Naive thymus-derived CD4-positive, alpha-beta T cell (primary cell): ENCODE measurements at regions of chr11 and their contacts with region 1.

Region 1: GRCh38 chr11:64846998-64847666 is 2.7 kb upstream of the CDC42BPG start:
- DNase-seq: peak; percentile 79 to 96 (median 89)
- ATAC-seq: peak; percentile 78
- H3K4me3 ChIP-seq: no peak overlapping the region
- H3K4me3 Mint-ChIP-seq: peak overlapping the region in 7 of 10 donors; percentile 14 to 55 (median 38)
- H3K27ac ChIP-seq: no peak overlapping the region
- H3K27ac Mint-ChIP-seq: peak overlapping the region; percentile 21 to 83 (median 72)
- H3K4me1 ChIP-seq: peaks cover 41 to 59% of the 10 kb centered on the region in 2 donors
- H3K4me1 Mint-ChIP-seq: peaks cover 40 to 68% (median 58%) of the 10 kb centered on the region in 7 donors
- H3K27me3 ChIP-seq: no peaks in the 10 kb centered on the region
- H3K27me3 Mint-ChIP-seq: no peaks in the 10 kb centered on the region

Region 2: DNA sequence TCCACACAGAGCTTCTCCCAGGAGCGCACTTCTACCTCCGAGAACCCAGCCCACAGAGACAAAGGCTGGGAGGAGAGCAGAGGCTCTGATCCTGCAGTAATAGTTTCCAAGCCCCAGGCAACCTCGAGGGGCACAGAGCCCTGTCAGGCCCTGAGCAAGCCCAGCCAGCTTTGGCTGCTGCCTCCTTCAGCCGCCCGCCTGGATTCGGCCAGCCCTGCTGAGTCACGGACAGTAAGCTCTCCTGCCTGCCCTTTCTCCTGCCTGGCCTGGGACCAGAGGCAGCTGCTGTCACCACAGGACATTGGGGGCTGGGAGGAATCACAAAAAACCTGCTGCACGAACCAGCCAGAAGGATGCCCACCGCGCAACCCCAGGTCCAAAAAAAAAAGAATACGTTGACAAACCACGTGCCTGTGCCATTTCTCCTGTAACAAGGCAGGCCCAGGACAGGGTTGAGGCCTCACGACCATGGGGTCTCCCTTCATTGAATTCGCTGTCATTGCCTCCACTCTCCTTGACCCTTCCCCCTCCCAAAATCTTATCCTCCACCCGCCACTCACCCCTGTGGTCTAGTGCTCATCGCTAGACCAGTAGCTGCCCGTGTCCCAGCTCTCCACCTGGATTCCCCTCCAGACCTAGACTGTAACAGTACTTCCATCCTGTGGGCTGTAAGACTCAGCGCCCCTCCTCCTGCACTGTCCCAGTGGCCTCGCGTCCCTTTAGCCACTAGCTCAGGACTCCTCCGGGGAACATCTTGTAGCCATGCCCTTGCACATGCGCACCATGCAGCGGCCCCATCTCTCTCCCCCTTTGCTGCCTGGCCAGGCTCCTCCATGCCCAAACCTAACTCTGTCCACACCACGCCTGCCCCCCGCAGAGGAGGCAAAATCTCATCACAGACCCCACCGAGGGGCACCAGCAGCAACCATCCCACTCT is 263.6 kb before region 1 on chr11:
- CTCF ChIA-PET with region 1: no interaction called
- POLR2A ChIA-PET with region 1: no interaction called
- intact Hi-C with region 1: no loop called
- DNase-seq: no peak
- ATAC-seq: no peak
- H3K4me3 ChIP-seq: no peak overlapping the region
- H3K4me3 Mint-ChIP-seq: no peak overlapping the region
- H3K27ac ChIP-seq: no peak overlapping the region
- H3K27ac Mint-ChIP-seq: no peak overlapping the region
- H3K4me1 ChIP-seq: no peaks in the 10 kb centered on the region
- H3K4me1 Mint-ChIP-seq: peaks cover 0 to 1% (median 0%) of the 10 kb centered on the region in 7 donors
- H3K27me3 ChIP-seq: no peaks in the 10 kb centered on the region
- H3K27me3 Mint-ChIP-seq: peaks cover 7 to 17% (median 11%) of the 10 kb centered on the region in 5 donors

Region 3: GRCh38 chr11:64778508-64779346 is 68.4 kb before region 1 on chr11 and contains the start of gene SF1:
- CTCF ChIA-PET with region 1: interaction called, 5 read pairs
- POLR2A ChIA-PET with region 1: interaction called, 23 read pairs
- intact Hi-C with region 1: loop called in 1 of 2 experiments (anchors 1 kb)
- DNase-seq: peak; percentile 86 to 100 (median 100)
- ATAC-seq: peak; percentile 89
- H3K4me3 ChIP-seq: peak within 1 kb of the TSS; percentile 94
- H3K4me3 Mint-ChIP-seq: peak within 1 kb of the TSS; percentile 90 to 97 (median 94)
- H3K27ac ChIP-seq: peak within 1 kb of the TSS; percentile 99
- H3K27ac Mint-ChIP-seq: peak within 1 kb of the TSS; percentile 98 to 100 (median 99)
- H3K4me1 ChIP-seq: peaks cover 48 to 52% of the 10 kb centered on the region in 2 donors
- H3K4me1 Mint-ChIP-seq: peaks cover 51 to 71% (median 64%) of the 10 kb centered on the region in 7 donors
- H3K27me3 ChIP-seq: no peaks in the 10 kb centered on the region
- H3K27me3 Mint-ChIP-seq: peaks cover 0 to 5% (median 0%) of the 10 kb centered on the region in 5 donors
- total RNA-seq, gene SF1: 462 to 1,612 (median 904) TPM

Region 4: DNA sequence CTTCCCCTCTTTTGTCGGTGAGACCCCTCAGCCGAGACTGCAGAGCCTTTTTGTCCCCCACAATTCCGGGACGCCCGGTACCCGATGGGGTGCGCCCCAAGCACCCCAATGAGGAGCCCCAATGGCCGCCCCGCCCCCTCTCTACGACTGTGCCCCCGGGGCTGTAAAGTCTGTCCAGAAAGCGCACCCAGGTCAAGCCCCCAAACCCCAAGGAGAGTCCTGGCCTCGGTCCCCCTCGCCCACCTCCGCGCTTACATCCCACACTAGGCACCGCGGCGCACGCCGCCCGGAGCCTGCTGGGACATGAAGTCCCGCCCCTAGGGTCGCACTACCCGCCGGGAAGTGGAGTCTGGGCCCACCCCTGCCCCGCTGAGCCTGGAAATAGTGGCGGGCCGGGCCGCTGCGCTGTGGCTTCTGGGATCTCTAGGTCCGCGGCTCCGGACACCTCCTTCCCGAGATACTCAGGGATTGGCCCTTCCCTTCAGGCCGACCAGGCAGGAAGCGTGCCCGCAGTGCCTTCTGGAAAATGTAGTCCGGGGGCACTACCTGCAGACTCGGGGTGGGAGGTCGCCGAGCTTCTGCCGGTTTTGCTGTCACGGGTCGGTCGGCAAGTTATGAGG is 36.8 kb before region 1 on chr11 and contains the start of gene MEN1:
- CTCF ChIA-PET with region 1: interaction called, 10 read pairs
- POLR2A ChIA-PET with region 1: interaction called, 6 read pairs
- intact Hi-C with region 1: loop called in 1 of 2 experiments (anchors 2 kb)
- DNase-seq: peak; percentile 64 to 85 (median 81)
- ATAC-seq: peak; percentile 91
- H3K4me3 ChIP-seq: peak within 1 kb of the TSS; percentile 99
- H3K4me3 Mint-ChIP-seq: peak within 1 kb of the TSS; percentile 91 to 98 (median 96)
- H3K27ac ChIP-seq: peak within 1 kb of the TSS; percentile 97
- H3K27ac Mint-ChIP-seq: peak within 1 kb of the TSS; percentile 88 to 97 (median 94)
- H3K4me1 ChIP-seq: peaks cover 7 to 11% of the 10 kb centered on the region in 2 donors
- H3K4me1 Mint-ChIP-seq: peaks cover 23 to 34% (median 30%) of the 10 kb centered on the region in 7 donors
- H3K27me3 ChIP-seq: no peaks in the 10 kb centered on the region
- H3K27me3 Mint-ChIP-seq: peaks cover 0 to 6% (median 0%) of the 10 kb centered on the region in 5 donors
- total RNA-seq, gene MEN1: 25.7 to 46.4 (median 38.0) TPM

Region 5: GRCh38 chr11:64887757-64888405 is 40.7 kb after region 1 on chr11:
- CTCF ChIA-PET with region 1: interaction called, 945 read pairs
- POLR2A ChIA-PET with region 1: interaction called, 1,324 read pairs
- intact Hi-C with region 1: loop called in 1 of 2 experiments (anchors 1 kb)
- DNase-seq: peak; percentile 74 to 94 (median 84)
- ATAC-seq: peak; percentile 92
- H3K4me3 ChIP-seq: peak overlapping the region; percentile 50
- H3K4me3 Mint-ChIP-seq: peak overlapping the region; percentile 15 to 89 (median 80)
- H3K27ac ChIP-seq: peak overlapping the region; percentile 49
- H3K27ac Mint-ChIP-seq: peak overlapping the region in 8 of 9 donors; percentile 51 to 95 (median 85)
- H3K4me1 ChIP-seq: peaks cover 15 to 21% of the 10 kb centered on the region in 2 donors
- H3K4me1 Mint-ChIP-seq: peaks cover 20 to 32% (median 28%) of the 10 kb centered on the region in 7 donors
- H3K27me3 ChIP-seq: no peaks in the 10 kb centered on the region
- H3K27me3 Mint-ChIP-seq: no peaks in the 10 kb centered on the region

Region 6: GRCh38 chr11:65013692-65014145 is 166.6 kb after region 1 on chr11:
- CTCF ChIA-PET with region 1: interaction called, 8 read pairs
- POLR2A ChIA-PET with region 1: interaction called, 3 read pairs
- intact Hi-C with region 1: loop called (anchors 1 kb)
- DNase-seq: peak in 8 of 9 donors; percentile 77 to 93 (median 90)
- ATAC-seq: peak; percentile 94
- H3K4me3 ChIP-seq: peak overlapping the region; percentile 97
- H3K4me3 Mint-ChIP-seq: peak overlapping the region; percentile 90 to 95 (median 92)
- H3K27ac ChIP-seq: peak overlapping the region; percentile 84
- H3K27ac Mint-ChIP-seq: peak overlapping the region; percentile 89 to 99 (median 95)
- H3K4me1 ChIP-seq: peaks cover 4 to 9% of the 10 kb centered on the region in 2 donors
- H3K4me1 Mint-ChIP-seq: peaks cover 14 to 33% (median 29%) of the 10 kb centered on the region in 7 donors
- H3K27me3 ChIP-seq: no peaks in the 10 kb centered on the region
- H3K27me3 Mint-ChIP-seq: no peaks in the 10 kb centered on the region

Region 7: DNA sequence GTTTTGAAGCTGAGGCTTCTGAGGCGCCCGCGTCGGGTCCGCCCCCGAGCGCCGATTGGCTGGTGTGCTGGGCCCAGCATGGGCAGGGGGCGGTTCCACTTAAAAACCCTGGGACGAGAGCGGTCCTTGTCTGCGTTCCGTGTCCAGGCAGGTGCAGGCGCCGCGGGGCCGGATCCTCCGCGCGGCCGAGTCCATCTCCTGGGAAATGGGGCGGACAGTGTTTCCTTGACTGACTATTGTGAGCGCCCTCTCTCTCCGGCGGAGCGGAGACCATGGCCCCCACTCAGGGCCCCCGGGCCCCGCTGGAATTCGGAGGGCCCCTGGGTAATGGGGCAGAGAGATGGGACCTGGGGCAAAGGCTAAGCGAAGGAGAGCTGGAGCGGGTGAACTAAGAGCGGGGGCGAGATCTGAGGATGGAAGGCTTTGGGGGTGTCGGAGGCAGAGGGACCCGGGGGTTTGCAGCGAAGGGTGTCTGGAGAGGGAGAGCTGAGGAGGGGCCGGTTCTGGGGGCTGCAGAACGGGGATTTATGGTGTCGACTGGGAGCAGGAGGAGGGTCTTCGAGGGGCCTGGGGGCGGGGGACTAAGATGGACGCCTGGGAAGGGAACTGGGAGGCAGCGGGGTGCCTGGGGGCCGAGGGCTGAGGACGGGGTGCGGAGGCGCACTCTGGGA is 264.7 kb after region 1 on chr11 and contains the start of gene TM7SF2:
- CTCF ChIA-PET with region 1: interaction called, 3 read pairs
- POLR2A ChIA-PET with region 1: interaction called, 6 read pairs
- intact Hi-C with region 1: loop called (anchors 1 to 2 kb)
- DNase-seq: peak; percentile 84 to 94 (median 92)
- ATAC-seq: peak; percentile 82
- H3K4me3 ChIP-seq: peak within 1 kb of the TSS; percentile 83
- H3K4me3 Mint-ChIP-seq: peak within 1 kb of the TSS; percentile 85 to 97 (median 89)
- H3K27ac ChIP-seq: peak within 1 kb of the TSS; percentile 74
- H3K27ac Mint-ChIP-seq: peak within 1 kb of the TSS; percentile 80 to 100 (median 90)
- H3K4me1 ChIP-seq: peaks cover 33 to 36% of the 10 kb centered on the region in 2 donors
- H3K4me1 Mint-ChIP-seq: peaks cover 18 to 52% (median 38%) of the 10 kb centered on the region in 7 donors
- H3K27me3 ChIP-seq: no peaks in the 10 kb centered on the region
- H3K27me3 Mint-ChIP-seq: no peaks in the 10 kb centered on the region
- total RNA-seq, gene TM7SF2: 21.6 to 37.8 (median 30.8) TPM